Activated CD8-positive, alpha-beta T cell treated with anti-CD3 and anti-CD28 coated beads for 36 hours (primary cell): ENCODE measurements at regions of chr7 and their contacts with region 1.

Region 1: GRCh38 chr7:27242555-27243339 is at the start of gene EVX1:
- DNase-seq: peak; percentile 72
- ATAC-seq: peak; percentile 53
- H3K4me3 Mint-ChIP-seq: no peak within 1 kb of the TSS
- H3K27ac Mint-ChIP-seq: no peak within 1 kb of the TSS
- H3K4me1 Mint-ChIP-seq: peaks cover 19% of the 10 kb centered on the region
- H3K27me3 Mint-ChIP-seq: peaks cover 80% of the 10 kb centered on the region
- CTCF ChIP-seq: no peak
- total RNA-seq, gene EVX1: not detected

Region 2: DNA sequence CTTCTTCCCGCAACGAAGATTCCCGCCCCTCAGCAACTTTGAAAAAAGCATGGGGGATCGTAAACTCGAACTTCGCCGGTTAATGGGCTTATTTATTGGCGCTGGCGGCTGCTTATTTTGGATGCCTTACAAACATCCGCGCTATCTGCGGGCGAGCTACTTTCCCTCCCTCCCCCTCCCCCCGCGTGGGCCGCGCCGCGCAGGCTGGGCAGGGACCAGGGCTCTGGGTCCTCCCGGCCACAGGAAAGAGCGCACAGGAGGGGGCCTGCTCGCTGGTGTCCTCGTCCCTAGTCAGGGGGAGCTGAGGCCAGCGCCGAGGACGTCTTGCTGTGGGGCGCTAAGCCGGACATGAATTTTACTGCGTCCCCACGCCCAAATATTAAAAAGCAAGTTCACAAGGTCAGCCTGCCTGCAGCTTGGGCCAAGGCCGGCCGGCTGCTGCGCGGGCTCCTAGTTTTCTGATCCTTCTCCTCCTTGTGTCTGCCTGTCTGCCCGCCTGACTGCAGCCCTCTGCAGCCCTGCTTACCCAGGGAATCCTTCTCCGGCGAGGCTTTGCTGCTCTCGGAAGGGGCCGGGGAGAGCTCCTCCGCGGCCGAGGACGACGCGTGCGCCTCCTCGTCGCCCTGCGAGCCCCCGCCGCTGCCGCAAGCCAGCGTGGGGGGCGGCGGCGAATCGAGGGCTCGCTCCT is 69.8 kb before region 1 on chr7:
- CTCF ChIA-PET with region 1: no interaction called
- POLR2A ChIA-PET with region 1: no interaction called
- intact Hi-C with region 1: loop called (anchors 5 kb)
- DNase-seq: no peak
- ATAC-seq: peak; percentile 32
- H3K4me3 Mint-ChIP-seq: peak overlapping the region; percentile 7
- H3K27ac Mint-ChIP-seq: no peak overlapping the region
- H3K4me1 Mint-ChIP-seq: peaks cover 20% of the 10 kb centered on the region
- H3K27me3 Mint-ChIP-seq: peaks cover 72% of the 10 kb centered on the region
- CTCF ChIP-seq: no peak

Region 3: GRCh38 chr7:27204851-27205337 is 37.9 kb before region 1 on chr7:
- CTCF ChIA-PET with region 1: interaction called, 4 read pairs
- POLR2A ChIA-PET with region 1: no interaction called
- intact Hi-C with region 1: loop called (anchors 2 kb)
- DNase-seq: no peak
- ATAC-seq: no peak
- H3K4me3 Mint-ChIP-seq: no peak overlapping the region
- H3K27ac Mint-ChIP-seq: no peak overlapping the region
- H3K4me1 Mint-ChIP-seq: peaks cover 27% of the 10 kb centered on the region
- H3K27me3 Mint-ChIP-seq: peaks cover 90% of the 10 kb centered on the region
- CTCF ChIP-seq: no peak

Region 4: GRCh38 chr7:27224983-27225934 is 17.5 kb before region 1 on chr7:
- CTCF ChIA-PET with region 1: no interaction called
- POLR2A ChIA-PET with region 1: no interaction called
- intact Hi-C with region 1: no loop called
- DNase-seq: no peak
- ATAC-seq: no peak
- H3K4me3 Mint-ChIP-seq: no peak overlapping the region
- H3K27ac Mint-ChIP-seq: no peak overlapping the region
- H3K4me1 Mint-ChIP-seq: no peaks in the 10 kb centered on the region
- H3K27me3 Mint-ChIP-seq: peaks cover 61% of the 10 kb centered on the region
- CTCF ChIP-seq: no peak